Left colon (tissue), 2 donors: ENCODE measurements at regions of chr12 and their contacts with region 1.

Region 1: DNA sequence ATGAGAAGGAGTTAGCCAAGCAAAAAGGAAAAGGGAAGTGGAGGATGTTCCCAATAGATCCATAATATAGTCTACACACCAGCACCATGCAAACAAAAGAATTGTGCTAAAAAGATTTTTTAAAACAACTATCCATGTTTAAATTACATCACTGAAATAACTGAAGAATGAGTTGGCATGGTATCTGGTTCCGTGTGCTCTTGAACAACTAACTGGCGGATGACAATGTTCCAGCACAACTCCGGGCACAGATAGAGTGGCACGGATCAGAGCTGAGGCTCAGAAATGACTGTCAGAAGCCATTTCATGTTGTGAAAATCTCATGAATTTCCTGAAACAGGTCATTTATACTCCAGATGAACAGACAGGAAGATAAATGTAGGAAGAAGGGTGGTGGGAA is 153.1 kb downstream of the HMGA2 start:
- DNase-seq: no peak
- ATAC-seq: no peak

Region 2: GRCh38 chr12:65823513-65824375 is 153.6 kb before region 1 on chr12:
- intact Hi-C with region 1: loop called in 1 of 2 experiments (anchors 10 kb)
- DNase-seq: peak; percentile 65 to 80
- ATAC-seq: peak; percentile 74